PC-3 (cell line): ENCODE measurements at regions of chr4 and their contacts with region 1.

Region 1: DNA sequence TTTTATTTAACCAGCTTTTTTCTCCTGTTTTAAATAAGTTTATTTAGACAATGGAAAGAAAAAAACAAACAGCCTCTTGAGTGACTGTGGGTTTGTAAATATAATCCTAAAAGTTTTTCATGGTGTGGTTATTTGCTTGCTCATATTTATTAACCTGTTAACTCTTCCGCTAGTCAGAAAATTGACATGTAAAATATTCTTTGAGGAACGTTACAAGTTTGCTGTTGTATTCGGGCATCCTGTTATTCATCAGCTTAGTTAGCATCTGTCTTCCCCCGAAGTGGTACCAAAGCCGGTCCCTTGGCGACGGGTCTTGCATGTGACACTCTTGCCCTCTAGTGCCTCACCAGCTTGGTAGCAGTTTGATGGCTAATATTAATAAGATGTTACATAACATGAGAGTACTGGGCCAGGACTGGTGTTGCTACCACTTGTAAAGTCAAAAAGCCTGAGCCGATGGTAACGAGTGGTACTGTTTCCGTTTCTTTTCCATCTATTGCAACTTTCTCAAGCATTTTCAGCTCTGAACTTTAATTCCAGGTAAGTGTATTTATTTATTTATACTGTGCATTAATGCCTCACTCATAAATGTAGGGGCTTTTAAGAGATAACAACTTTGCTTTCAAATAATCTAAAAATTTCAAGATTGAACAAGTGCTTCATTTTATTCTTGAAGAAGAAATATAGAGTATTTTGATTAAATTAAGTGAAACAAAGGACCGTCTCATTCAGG is at the start of gene NDST3:
- DNase-seq: peak; percentile 66
- ATAC-seq: peak; percentile 73
- H3K4me3 ChIP-seq: peak within 1 kb of the TSS; percentile 68
- H3K27ac ChIP-seq: no peak within 1 kb of the TSS
- H3K4me1 ChIP-seq: peaks cover 8% of the 10 kb centered on the region; the same call in 1 of the 2 replicates
- H3K27me3 ChIP-seq: no peaks in the 10 kb centered on the region
- CTCF ChIP-seq: peak; percentile 67
- total RNA-seq, gene NDST3: 0.04 and 0.17 TPM in 2 replicates

Region 2: GRCh38 chr4:117324851-117325491 is 709.2 kb before region 1 on chr4:
- CTCF ChIA-PET with region 1: no interaction called
- POLR2A ChIA-PET with region 1: no interaction called
- intact Hi-C with region 1: loop called (anchors 10 kb)
- DNase-seq: peak; percentile 93
- ATAC-seq: peak; percentile 90
- H3K4me3 ChIP-seq: peak overlapping the region; percentile 70
- H3K27ac ChIP-seq: peak overlapping the region; percentile 99
- H3K4me1 ChIP-seq: peaks cover 28% of the 10 kb centered on the region
- H3K27me3 ChIP-seq: no peaks in the 10 kb centered on the region
- CTCF ChIP-seq: no peak

Region 3: DNA sequence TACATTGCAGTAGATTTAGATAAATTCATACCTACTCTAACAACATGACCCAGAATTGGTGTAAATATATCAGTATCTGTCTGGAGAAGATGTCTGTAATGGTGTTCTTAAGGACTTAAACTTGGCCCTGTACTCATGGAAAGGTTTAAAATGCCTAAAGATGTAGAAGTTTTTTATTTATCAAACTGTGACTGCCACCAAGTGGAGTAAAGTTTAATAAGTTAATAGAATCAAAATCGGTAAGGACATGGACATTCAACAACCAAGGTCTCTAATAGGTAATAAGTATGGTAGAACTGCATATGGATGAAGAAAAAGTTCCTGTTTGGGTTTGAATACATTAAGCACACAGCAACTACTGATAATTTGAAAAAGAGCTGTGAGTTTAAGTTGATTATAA is 473.9 kb before region 1 on chr4:
- CTCF ChIA-PET with region 1: no interaction called
- POLR2A ChIA-PET with region 1: no interaction called
- intact Hi-C with region 1: loop called (anchors 1 kb)
- DNase-seq: peak; percentile 50
- ATAC-seq: no peak; the same call in none of the 2 replicates
- H3K4me3 ChIP-seq: no peak overlapping the region
- H3K27ac ChIP-seq: no peak overlapping the region
- H3K4me1 ChIP-seq: no peaks in the 10 kb centered on the region
- H3K27me3 ChIP-seq: no peaks in the 10 kb centered on the region
- CTCF ChIP-seq: peak; percentile 52; the same call in 1 of the 2 replicates

Region 4: GRCh38 chr4:117771647-117772337 is 262.4 kb before region 1 on chr4:
- CTCF ChIA-PET with region 1: no interaction called
- POLR2A ChIA-PET with region 1: no interaction called
- intact Hi-C with region 1: loop called (anchors 1 kb)
- DNase-seq: no peak
- ATAC-seq: peak; percentile 22; the same call in 1 of the 2 replicates
- H3K4me3 ChIP-seq: no peak overlapping the region
- H3K27ac ChIP-seq: no peak overlapping the region
- H3K4me1 ChIP-seq: no peaks in the 10 kb centered on the region; the same call in none of the 2 replicates
- H3K27me3 ChIP-seq: no peaks in the 10 kb centered on the region
- CTCF ChIP-seq: no peak

Region 5: GRCh38 chr4:117983541-117984365 is 50.5 kb before region 1 on chr4:
- CTCF ChIA-PET with region 1: no interaction called
- POLR2A ChIA-PET with region 1: no interaction called
- intact Hi-C with region 1: no loop called
- DNase-seq: no peak
- ATAC-seq: peak; percentile 40; the same call in 1 of the 2 replicates
- H3K4me3 ChIP-seq: no peak overlapping the region
- H3K27ac ChIP-seq: no peak overlapping the region
- H3K4me1 ChIP-seq: no peaks in the 10 kb centered on the region
- H3K27me3 ChIP-seq: no peaks in the 10 kb centered on the region
- CTCF ChIP-seq: no peak

Region 6: DNA sequence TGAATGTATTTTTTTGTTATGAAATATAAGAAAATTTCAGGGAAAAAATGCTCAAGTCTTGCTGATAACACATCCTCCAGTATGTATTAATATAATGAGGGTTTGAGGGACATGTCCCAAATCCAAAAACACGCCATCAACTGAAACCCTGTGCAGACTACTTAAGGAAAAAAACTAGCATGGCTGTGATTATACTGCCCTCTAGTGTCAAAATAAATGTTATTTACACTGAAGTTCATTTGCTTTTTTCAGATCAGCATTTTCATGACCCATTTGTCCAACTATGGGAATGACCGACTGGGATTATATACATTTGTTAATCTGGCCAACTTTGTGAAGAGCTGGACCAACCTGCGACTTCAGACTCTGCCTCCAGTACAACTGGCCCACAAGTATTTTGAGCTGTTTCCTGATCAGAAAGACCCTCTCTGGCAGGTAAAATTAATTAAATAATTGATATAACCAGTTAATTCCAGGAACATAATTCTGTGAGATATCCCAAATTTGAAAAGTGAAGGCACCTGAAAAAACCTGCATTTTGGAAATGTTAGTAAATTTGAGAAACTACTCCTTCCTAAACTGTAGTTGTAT is 190.1 kb after region 1 on chr4:
- CTCF ChIA-PET with region 1: no interaction called
- POLR2A ChIA-PET with region 1: no interaction called
- intact Hi-C with region 1: loop called (anchors 5 kb)
- DNase-seq: peak; percentile 63
- ATAC-seq: peak; percentile 54
- H3K4me3 ChIP-seq: no peak overlapping the region
- H3K27ac ChIP-seq: no peak overlapping the region
- H3K4me1 ChIP-seq: no peaks in the 10 kb centered on the region
- H3K27me3 ChIP-seq: no peaks in the 10 kb centered on the region
- CTCF ChIP-seq: peak; percentile 68